Mammary epithelial cell (primary cell): ENCODE measurements at regions of chr9 and their contacts with region 1.

Region 1: GRCh38 chr9:112486221-112487007 is at the start of gene KIAA1958:
- DNase-seq: peak; percentile 73
- H3K4me3 ChIP-seq: peak within 1 kb of the TSS; percentile 65 to 88 (median 75)
- H3K27ac ChIP-seq: no peak within 1 kb of the TSS
- H3K4me1 ChIP-seq: peaks cover 13% of the 10 kb centered on the region
- H3K27me3 ChIP-seq: no peaks in the 10 kb centered on the region
- CTCF ChIP-seq: no peak
- total RNA-seq, gene KIAA1958: 2.5 TPM

Region 2: DNA sequence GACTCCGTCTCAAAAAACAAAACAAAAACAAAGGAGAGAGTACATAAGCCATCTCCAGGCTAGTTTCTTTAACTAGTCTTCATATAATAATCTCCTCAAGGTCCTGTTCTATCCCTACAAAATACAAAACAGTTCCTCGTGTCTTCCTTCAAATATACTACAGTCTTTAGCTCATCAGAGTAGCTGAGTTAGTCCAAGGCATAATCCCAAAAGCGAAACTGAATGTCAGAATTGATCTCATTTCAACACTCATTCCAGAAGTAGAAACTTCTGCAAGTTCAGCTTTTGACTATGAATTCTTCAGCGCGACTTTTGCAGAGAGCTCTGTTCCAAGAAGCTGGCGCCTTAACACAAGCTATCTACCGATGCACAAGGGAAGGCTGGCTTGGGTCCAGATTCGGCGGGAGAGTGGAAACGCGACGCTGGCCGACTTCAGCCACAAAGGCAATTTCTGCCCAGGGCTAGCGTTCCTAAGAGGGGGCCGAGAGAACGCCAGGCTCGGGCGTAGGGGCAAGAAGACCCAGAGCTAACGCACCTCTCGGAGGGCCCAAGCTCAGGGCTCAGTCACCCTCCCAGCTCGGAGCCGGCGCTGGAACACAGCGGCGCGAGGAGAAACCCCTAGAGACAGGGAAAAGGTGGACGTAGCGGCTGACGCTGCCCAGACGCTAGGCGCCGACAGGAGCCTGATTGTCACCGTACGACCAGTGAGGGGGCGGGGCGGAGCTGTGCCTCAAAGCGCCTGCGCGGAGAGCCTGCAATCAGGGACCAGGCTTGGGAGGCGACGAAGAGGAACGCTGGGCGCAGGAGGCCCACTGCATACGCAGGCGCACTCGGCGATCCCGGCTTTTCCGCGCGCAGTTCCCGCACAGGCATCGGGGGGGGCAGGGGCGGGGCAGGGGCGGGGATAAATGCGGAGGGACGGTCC is 107.0 kb before region 1 on chr9:
- CTCF ChIA-PET with region 1: no interaction called
- dilution Hi-C with region 1: no loop called
- in situ Hi-C with region 1: no loop called
- intact Hi-C with region 1: loop called (anchors 2 kb)
- DNase-seq: peak; percentile 97
- H3K4me3 ChIP-seq: peak overlapping the region; percentile 83 to 93 (median 92)
- H3K27ac ChIP-seq: peak overlapping the region; percentile 88
- H3K4me1 ChIP-seq: peaks cover 5% of the 10 kb centered on the region
- H3K27me3 ChIP-seq: no peaks in the 10 kb centered on the region
- CTCF ChIP-seq: no peak

Region 3: GRCh38 chr9:112665347-112665746 is 178.9 kb after region 1 on chr9:
- CTCF ChIA-PET with region 1: interaction called, 6 read pairs
- dilution Hi-C with region 1: no loop called
- in situ Hi-C with region 1: no loop called
- intact Hi-C with region 1: loop called (anchors 1 kb)
- DNase-seq: peak; percentile 11
- H3K4me3 ChIP-seq: no peak overlapping the region
- H3K27ac ChIP-seq: no peak overlapping the region
- H3K4me1 ChIP-seq: no peaks in the 10 kb centered on the region
- H3K27me3 ChIP-seq: no peaks in the 10 kb centered on the region
- CTCF ChIP-seq: peak; percentile 38 to 55

Region 4: GRCh38 chr9:112717661-112718341 is 231.4 kb after region 1 on chr9 and contains the start of gene INIP:
- CTCF ChIA-PET with region 1: no interaction called
- dilution Hi-C with region 1: no loop called
- in situ Hi-C with region 1: no loop called
- intact Hi-C with region 1: loop called (anchors 5 kb)
- DNase-seq: peak; percentile 97
- H3K4me3 ChIP-seq: peak within 1 kb of the TSS; percentile 63 to 91 (median 80)
- H3K27ac ChIP-seq: peak within 1 kb of the TSS; percentile 70
- H3K4me1 ChIP-seq: peaks cover 8% of the 10 kb centered on the region
- H3K27me3 ChIP-seq: no peaks in the 10 kb centered on the region
- CTCF ChIP-seq: peak in 1 of 2 donors; percentile 29
- total RNA-seq, gene INIP: 23.2 to 24.3 TPM